GM12878 (cell line): ENCODE measurements at regions of chr3 and their contacts with region 1.

Region 1: DNA sequence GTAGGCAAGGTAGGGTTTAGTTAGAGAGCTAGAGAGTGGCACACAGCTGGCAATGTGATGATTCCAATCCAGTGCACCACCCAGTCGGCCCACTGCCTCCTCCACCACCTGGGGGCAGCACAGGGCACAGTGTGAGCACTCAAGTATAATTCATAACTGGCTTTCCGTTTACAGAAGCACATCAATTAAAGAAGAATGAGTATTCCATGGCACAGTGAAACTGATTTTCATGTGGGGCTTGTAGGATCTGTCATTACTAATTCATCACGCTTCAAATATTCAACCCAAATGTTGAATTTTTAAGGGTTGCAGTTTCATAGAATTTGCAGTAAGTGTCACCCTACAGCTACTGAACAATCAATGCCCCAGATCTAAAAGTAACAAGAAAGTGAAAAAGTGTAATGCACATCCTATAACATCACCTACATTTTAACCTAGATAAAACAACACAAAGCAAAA is 149.9 kb downstream of the IGSF11 start:
- DNase-seq: no peak
- ATAC-seq: peak; percentile 92
- H3K4me3 ChIP-seq: no peak overlapping the region
- H3K27ac ChIP-seq: no peak overlapping the region
- H3K4me1 ChIP-seq: no peaks in the 10 kb centered on the region
- H3K27me3 ChIP-seq: no peaks in the 10 kb centered on the region
- CTCF ChIP-seq: peak; percentile 74 to 91 (median 88)
- EP300 ChIP-seq: no peak
- POLR2A ChIP-seq: no peak
- RAD21 ChIP-seq: peak; percentile 57

Region 2: DNA sequence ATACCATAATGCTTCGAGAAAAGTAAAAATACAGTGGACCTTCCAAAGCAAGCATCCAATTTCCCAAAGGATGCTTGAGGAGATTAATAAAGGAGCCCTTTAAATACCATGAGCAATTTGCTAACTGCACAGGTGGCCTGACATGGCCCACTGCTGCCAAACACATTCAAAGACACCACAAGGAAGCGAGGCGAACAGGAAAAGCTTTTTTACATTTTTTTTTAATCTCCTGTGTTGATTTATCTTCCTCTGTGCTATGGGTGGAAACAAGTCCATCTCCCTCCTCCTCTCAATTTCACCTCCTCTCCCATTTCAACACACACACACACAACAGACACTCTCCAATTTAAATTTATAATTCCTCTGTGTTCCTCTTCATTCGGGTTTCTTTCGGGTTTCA is 93.5 kb before region 1 on chr3:
- CTCF ChIA-PET with region 1: no interaction called
- POLR2A ChIA-PET with region 1: no interaction called
- RAD21 ChIA-PET with region 1: no interaction called
- SMC1A ChIA-PET with region 1: no interaction called
- in situ Hi-C with region 1: no loop called
- intact Hi-C with region 1: no loop called
- DNase-seq: no peak
- ATAC-seq: no peak
- H3K4me3 ChIP-seq: no peak overlapping the region
- H3K27ac ChIP-seq: no peak overlapping the region
- H3K4me1 ChIP-seq: peaks cover 3% of the 10 kb centered on the region; the same call in 1 of the 2 replicates
- H3K27me3 ChIP-seq: no peaks in the 10 kb centered on the region
- CTCF ChIP-seq: no peak
- EP300 ChIP-seq: no peak
- POLR2A ChIP-seq: no peak
- RAD21 ChIP-seq: no peak

Region 3: GRCh38 chr3:118868051-118868450 is 16.7 kb before region 1 on chr3:
- CTCF ChIA-PET with region 1: interaction called, 23 read pairs
- POLR2A ChIA-PET with region 1: no interaction called
- RAD21 ChIA-PET with region 1: no interaction called
- SMC1A ChIA-PET with region 1: interaction called, 4 read pairs
- in situ Hi-C with region 1: no loop called
- intact Hi-C with region 1: no loop called
- DNase-seq: no peak
- ATAC-seq: no peak
- H3K4me3 ChIP-seq: no peak overlapping the region
- H3K27ac ChIP-seq: no peak overlapping the region
- H3K4me1 ChIP-seq: no peaks in the 10 kb centered on the region
- H3K27me3 ChIP-seq: no peaks in the 10 kb centered on the region; a peak in 1 of 4 replicates
- CTCF ChIP-seq: no peak
- EP300 ChIP-seq: no peak
- POLR2A ChIP-seq: no peak
- RAD21 ChIP-seq: no peak

Region 4: DNA sequence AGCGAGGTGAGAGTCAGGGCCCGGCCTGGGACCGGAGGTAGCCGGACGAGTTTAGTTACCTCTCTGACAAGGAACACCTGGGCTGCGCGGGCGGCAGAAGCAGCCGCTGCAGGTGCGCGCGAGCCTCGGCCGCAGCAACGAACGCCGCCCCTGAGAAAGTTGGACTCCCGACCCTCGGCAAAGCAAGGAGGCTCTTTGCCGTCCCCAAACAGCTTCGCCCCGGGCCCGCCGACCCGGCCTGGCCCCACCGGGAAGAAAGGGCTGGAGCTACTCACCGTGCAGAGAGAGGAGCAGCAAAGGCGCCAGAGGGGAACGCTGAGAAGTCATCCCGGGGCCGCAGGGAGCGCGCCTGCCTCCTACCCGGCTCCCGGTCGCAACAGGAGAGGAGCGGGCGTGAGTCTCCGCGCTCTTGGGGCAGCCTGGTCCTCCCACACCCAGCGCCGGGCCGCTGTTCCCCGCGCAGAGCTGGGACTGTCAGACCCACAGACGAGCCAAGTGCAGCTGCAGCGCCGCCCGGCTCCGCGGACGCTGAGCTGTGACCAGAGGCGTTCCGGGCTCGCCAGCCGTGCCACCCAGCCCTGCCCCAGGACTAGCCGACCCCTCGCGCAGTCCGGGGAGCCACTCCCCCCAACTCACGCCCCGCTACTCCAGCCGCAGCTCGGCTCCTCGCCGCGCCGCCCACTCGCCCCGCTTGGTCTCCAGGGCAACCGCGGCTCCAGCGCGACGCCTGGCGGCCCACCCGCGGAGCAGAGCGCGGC is 149.7 kb after region 1 on chr3 and contains the start of gene IGSF11:
- CTCF ChIA-PET with region 1: interaction called, 181 read pairs
- POLR2A ChIA-PET with region 1: no interaction called
- RAD21 ChIA-PET with region 1: interaction called, 60 read pairs
- SMC1A ChIA-PET with region 1: interaction called, 59 read pairs
- in situ Hi-C with region 1: loop called (anchors 5 kb)
- intact Hi-C with region 1: loop called (anchors 1 kb)
- DNase-seq: no peak
- ATAC-seq: peak; percentile 98
- H3K4me3 ChIP-seq: peak within 1 kb of the TSS; percentile 43; the same call in 1 of the 2 replicates
- H3K27ac ChIP-seq: no peak within 1 kb of the TSS
- H3K4me1 ChIP-seq: no peaks in the 10 kb centered on the region
- H3K27me3 ChIP-seq: peaks cover 2 to 14% of the 10 kb centered on the region in 2 experiments
- CTCF ChIP-seq: peak; percentile 51 to 68 (median 52); a peak in 5 of 6 replicates
- EP300 ChIP-seq: no peak
- POLR2A ChIP-seq: no peak
- RAD21 ChIP-seq: peak; percentile 43
- polyA plus RNA-seq, gene IGSF11: not detected

Region 5: DNA sequence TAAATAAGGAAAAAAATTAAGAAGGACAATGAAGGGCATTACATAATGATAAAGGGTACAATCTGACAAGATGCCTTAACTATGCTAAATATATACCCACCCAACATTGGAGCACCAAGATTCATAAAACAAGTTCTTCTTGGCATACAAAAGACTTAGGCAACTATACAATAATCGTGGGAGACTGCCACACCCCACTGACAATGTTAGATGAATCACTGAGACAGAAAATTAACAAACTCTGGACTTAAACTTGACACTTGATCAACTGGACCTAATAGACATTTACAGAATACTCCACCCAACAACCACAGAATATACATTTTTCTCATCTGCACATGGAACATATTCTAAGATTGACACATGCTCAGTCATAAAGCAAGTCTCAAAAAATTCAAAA is 203.0 kb after region 1 on chr3:
- CTCF ChIA-PET with region 1: interaction called, 221 read pairs
- POLR2A ChIA-PET with region 1: interaction called, 3 read pairs
- RAD21 ChIA-PET with region 1: interaction called, 3 read pairs
- SMC1A ChIA-PET with region 1: interaction called, 88 read pairs
- in situ Hi-C with region 1: no loop called
- intact Hi-C with region 1: no loop called
- DNase-seq: no peak
- ATAC-seq: no peak
- H3K4me3 ChIP-seq: no peak overlapping the region
- H3K27ac ChIP-seq: no peak overlapping the region
- H3K4me1 ChIP-seq: no peaks in the 10 kb centered on the region
- H3K27me3 ChIP-seq: no peaks in the 10 kb centered on the region; a peak in 1 of 4 replicates
- CTCF ChIP-seq: no peak
- EP300 ChIP-seq: no peak
- POLR2A ChIP-seq: no peak
- RAD21 ChIP-seq: no peak

Region 6: DNA sequence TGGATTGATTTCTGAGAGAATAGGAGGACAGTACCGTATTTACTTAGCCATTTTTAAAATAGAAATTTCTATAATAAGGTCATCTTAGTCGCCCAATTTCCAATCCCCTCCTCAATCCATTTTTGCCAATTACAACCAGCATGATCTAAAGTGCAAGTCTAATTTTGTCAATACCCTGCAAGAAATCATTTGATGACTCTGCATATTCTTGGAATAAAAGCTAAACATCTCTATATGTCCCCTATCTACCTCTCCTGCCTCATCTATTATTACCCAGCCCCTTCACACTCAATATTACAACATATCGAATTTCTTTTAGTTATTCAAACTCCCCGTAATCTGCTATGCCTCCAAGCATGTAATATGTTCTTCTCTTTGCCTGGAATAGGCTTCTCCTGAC is 219.3 kb after region 1 on chr3:
- CTCF ChIA-PET with region 1: interaction called, 221 read pairs
- POLR2A ChIA-PET with region 1: no interaction called
- RAD21 ChIA-PET with region 1: interaction called, 84 read pairs
- SMC1A ChIA-PET with region 1: interaction called, 88 read pairs
- in situ Hi-C with region 1: loop called (anchors 5 kb)
- intact Hi-C with region 1: no loop called
- DNase-seq: no peak
- ATAC-seq: no peak
- H3K4me3 ChIP-seq: no peak overlapping the region
- H3K27ac ChIP-seq: no peak overlapping the region
- H3K4me1 ChIP-seq: no peaks in the 10 kb centered on the region
- H3K27me3 ChIP-seq: peaks cover 0 to 2% of the 10 kb centered on the region in 2 experiments; a peak in 1 of 4 replicates
- CTCF ChIP-seq: no peak
- EP300 ChIP-seq: no peak
- POLR2A ChIP-seq: no peak
- RAD21 ChIP-seq: no peak

Region 7: GRCh38 chr3:119257682-119258410 is 373.1 kb after region 1 on chr3:
- CTCF ChIA-PET with region 1: interaction called, 18 read pairs
- POLR2A ChIA-PET with region 1: no interaction called
- RAD21 ChIA-PET with region 1: no interaction called
- SMC1A ChIA-PET with region 1: interaction called, 3 read pairs
- in situ Hi-C with region 1: no loop called
- intact Hi-C with region 1: no loop called
- DNase-seq: no peak
- ATAC-seq: peak; percentile 92
- H3K4me3 ChIP-seq: no peak overlapping the region
- H3K27ac ChIP-seq: no peak overlapping the region
- H3K4me1 ChIP-seq: peaks cover 10% of the 10 kb centered on the region; the same call in 1 of the 2 replicates
- H3K27me3 ChIP-seq: no peaks in the 10 kb centered on the region
- CTCF ChIP-seq: no peak
- EP300 ChIP-seq: no peak
- POLR2A ChIP-seq: no peak
- RAD21 ChIP-seq: no peak